T-cell (primary cell): ENCODE measurements at regions of chr7 and their contacts with region 1.

Region 1: DNA sequence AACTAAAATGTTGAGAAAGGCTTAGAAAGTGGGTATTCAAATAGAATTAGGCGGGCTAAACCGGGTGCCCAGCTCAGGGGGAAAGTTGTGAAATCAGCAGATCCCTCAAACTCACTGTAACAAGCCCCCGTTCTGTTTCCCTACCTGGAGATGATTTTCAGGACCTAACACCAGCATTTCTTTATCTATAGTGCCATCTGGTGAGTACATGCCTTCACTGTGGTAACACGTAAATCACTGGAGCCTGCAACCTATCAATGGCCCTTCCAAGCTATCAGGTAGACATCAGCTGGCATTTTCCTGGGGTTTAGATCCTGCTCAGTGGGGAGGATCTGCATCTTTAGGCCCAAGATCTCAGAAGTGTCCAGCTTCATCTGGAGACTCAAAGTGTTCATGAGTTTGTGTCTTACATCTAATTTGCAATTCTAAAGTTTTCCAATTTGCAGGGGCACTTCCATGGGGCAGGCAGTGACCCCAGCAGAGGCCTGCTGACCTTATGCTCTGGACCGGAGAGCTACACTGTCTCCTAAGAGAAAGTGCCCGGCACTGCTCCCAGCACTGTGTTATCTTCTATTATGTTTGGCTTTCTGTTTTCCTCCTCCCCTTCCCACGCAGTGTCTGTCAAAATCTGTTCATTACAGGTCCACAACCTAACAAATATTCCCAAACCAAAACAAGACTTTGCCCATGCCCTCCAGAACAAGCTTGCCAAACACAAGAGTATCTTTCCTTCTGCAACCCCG is 132.5 kb downstream of the LSM5 start:
- DNase-seq: no peak
- ATAC-seq: no peak
- H3K4me3 ChIP-seq: no peak overlapping the region
- H3K4me3 Mint-ChIP-seq: no peak overlapping the region
- H3K27ac ChIP-seq: no peak overlapping the region
- H3K27ac Mint-ChIP-seq: no peak overlapping the region
- H3K4me1 ChIP-seq: no peaks in the 10 kb centered on the region
- H3K4me1 Mint-ChIP-seq: no peaks in the 10 kb centered on the region
- H3K27me3 ChIP-seq: peaks cover 0 to 10% of the 10 kb centered on the region in 2 experiments
- H3K27me3 Mint-ChIP-seq: peaks cover 10 to 23% of the 10 kb centered on the region in 2 donors

Region 2: GRCh38 chr7:32347244-32347828 is 10.4 kb before region 1 on chr7:
- CTCF ChIA-PET with region 1: interaction called in 1 of 2 experiments, 10 read pairs
- POLR2A ChIA-PET with region 1: no interaction called
- DNase-seq: peak in 3 of 35 experiments; percentile 0 to 13 (median 4)
- ATAC-seq: no peak
- H3K4me3 ChIP-seq: no peak overlapping the region
- H3K4me3 Mint-ChIP-seq: no peak overlapping the region
- H3K27ac ChIP-seq: no peak overlapping the region
- H3K27ac Mint-ChIP-seq: no peak overlapping the region
- H3K4me1 ChIP-seq: no peaks in the 10 kb centered on the region
- H3K4me1 Mint-ChIP-seq: no peaks in the 10 kb centered on the region
- H3K27me3 ChIP-seq: no peaks in the 10 kb centered on the region
- H3K27me3 Mint-ChIP-seq: peaks cover 6 to 7% of the 10 kb centered on the region in 2 donors

Region 3: GRCh38 chr7:32453341-32454011 is 95.8 kb after region 1 on chr7:
- CTCF ChIA-PET with region 1: no interaction called
- POLR2A ChIA-PET with region 1: no interaction called
- DNase-seq: no peak
- ATAC-seq: no peak
- H3K4me3 ChIP-seq: no peak overlapping the region
- H3K4me3 Mint-ChIP-seq: no peak overlapping the region
- H3K27ac ChIP-seq: no peak overlapping the region
- H3K27ac Mint-ChIP-seq: no peak overlapping the region
- H3K4me1 ChIP-seq: no peaks in the 10 kb centered on the region
- H3K4me1 Mint-ChIP-seq: no peaks in the 10 kb centered on the region
- H3K27me3 ChIP-seq: peaks cover 0 to 9% of the 10 kb centered on the region in 2 experiments
- H3K27me3 Mint-ChIP-seq: peaks cover 9 to 12% of the 10 kb centered on the region in 2 donors